ENCODE measurements at regions of chrX and their contacts with region 1.

Region 1: DNA sequence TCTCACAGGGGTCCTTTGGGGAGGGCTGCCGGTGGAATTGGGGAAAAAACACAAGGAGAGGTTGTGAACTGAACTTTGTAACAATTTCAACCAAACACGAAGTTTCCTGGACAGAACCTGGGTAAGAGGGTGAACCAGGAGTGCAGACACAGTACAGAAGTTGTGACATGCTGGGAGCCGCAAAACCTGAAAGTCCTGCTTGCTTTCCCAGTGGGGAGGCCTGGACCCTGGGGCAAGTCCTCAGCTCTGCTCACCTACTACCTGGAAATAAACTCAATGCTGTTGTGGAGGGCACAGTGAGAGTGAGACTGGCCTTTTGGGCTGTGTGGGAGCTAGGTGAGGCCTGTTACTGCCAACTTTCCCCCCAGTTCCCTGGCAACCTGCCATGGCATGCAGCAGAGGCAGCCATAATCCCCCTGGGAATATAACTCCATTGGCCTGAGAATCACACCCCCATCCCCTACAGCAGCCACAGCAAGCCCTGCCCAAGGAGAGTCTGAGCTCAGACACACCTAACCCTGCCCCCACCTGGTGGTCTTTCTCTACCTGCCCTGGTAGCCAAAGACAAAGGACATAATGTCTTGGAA is 162.8 kb downstream of the THOC2 start:
- DNase-seq: peak; percentile 69 to 89
- H3K4me3 ChIP-seq: peak overlapping the region; percentile 10; the same call in 1 of the 2 replicates
- H3K27ac ChIP-seq: peak overlapping the region; percentile 36; the same call in 1 of the 2 replicates
- H3K4me1 ChIP-seq: peaks cover 21% of the 10 kb centered on the region
- H3K27me3 ChIP-seq: no peaks in the 10 kb centered on the region
- CTCF ChIP-seq: no peak

Region 2: GRCh38 chrX:123339221-123339905 is 230.7 kb before region 1 on chrX:
- CTCF ChIA-PET with region 1: no interaction called
- POLR2A ChIA-PET with region 1: interaction called, 24 read pairs
- intact Hi-C with region 1: no loop called
- DNase-seq: no peak
- H3K4me3 ChIP-seq: no peak overlapping the region
- H3K27ac ChIP-seq: no peak overlapping the region
- H3K4me1 ChIP-seq: no peaks in the 10 kb centered on the region
- H3K27me3 ChIP-seq: no peaks in the 10 kb centered on the region
- CTCF ChIP-seq: no peak

Region 3: GRCh38 chrX:124018023-124018422 is 447.9 kb after region 1 on chrX:
- CTCF ChIA-PET with region 1: no interaction called
- POLR2A ChIA-PET with region 1: no interaction called
- intact Hi-C with region 1: no loop called
- DNase-seq: no peak
- H3K4me3 ChIP-seq: no peak overlapping the region
- H3K27ac ChIP-seq: no peak overlapping the region
- H3K4me1 ChIP-seq: no peaks in the 10 kb centered on the region
- H3K27me3 ChIP-seq: no peaks in the 10 kb centered on the region
- CTCF ChIP-seq: no peak; the same call in 1 of the 2 replicates

Measured in PC-9 (cell line).